Activated CD4-positive, alpha-beta memory T cell treated with anti-CD3 and anti-CD28 coated beads for 36 hours (primary cell): ENCODE measurements at regions of chr2 and their contacts with region 1.

Region 1: GRCh38 chr2:98757904-98758421 is 27.0 kb upstream of the MGAT4A start:
- DNase-seq: peak; percentile 69
- H3K4me3 Mint-ChIP-seq: peak overlapping the region; percentile 51
- H3K27ac Mint-ChIP-seq: peak overlapping the region; percentile 86
- H3K4me1 Mint-ChIP-seq: peaks cover 51% of the 10 kb centered on the region
- H3K27me3 Mint-ChIP-seq: no peaks in the 10 kb centered on the region

Region 2: GRCh38 chr2:98736464-98736889 is 21.5 kb before region 1 on chr2:
- CTCF ChIA-PET with region 1: interaction called, 12 read pairs
- POLR2A ChIA-PET with region 1: interaction called, 8 read pairs
- intact Hi-C with region 1: loop called (anchors 1 kb)
- DNase-seq: peak; percentile 54
- H3K4me3 Mint-ChIP-seq: peak overlapping the region; percentile 54
- H3K27ac Mint-ChIP-seq: peak overlapping the region; percentile 72
- H3K4me1 Mint-ChIP-seq: peaks cover 71% of the 10 kb centered on the region
- H3K27me3 Mint-ChIP-seq: no peaks in the 10 kb centered on the region